HCT116 (cell line): ENCODE measurements at regions of chr9 and their contacts with region 1.

Region 1: GRCh38 chr9:20562051-20562450 is 60.2 kb downstream of the MLLT3 start:
- DNase-seq: no peak
- ATAC-seq: no peak
- H3K4me3 ChIP-seq: no peak overlapping the region
- H3K27ac ChIP-seq: no peak overlapping the region
- H3K4me1 ChIP-seq: no peaks in the 10 kb centered on the region
- H3K27me3 ChIP-seq: peaks cover 23% of the 10 kb centered on the region
- CTCF ChIP-seq: no peak
- POLR2A ChIP-seq: no peak
- RAD21 ChIP-seq: no peak

Region 2: GRCh38 chr9:20573023-20573422 is 11.0 kb after region 1 on chr9:
- CTCF ChIA-PET with region 1: no interaction called
- POLR2A ChIA-PET with region 1: no interaction called
- RAD21 ChIA-PET with region 1: no interaction called
- intact Hi-C with region 1: no loop called
- DNase-seq: no peak
- ATAC-seq: no peak
- H3K4me3 ChIP-seq: no peak overlapping the region
- H3K27ac ChIP-seq: no peak overlapping the region
- H3K4me1 ChIP-seq: no peaks in the 10 kb centered on the region
- H3K27me3 ChIP-seq: peaks cover 8% of the 10 kb centered on the region; the same call in 1 of the 2 replicates
- CTCF ChIP-seq: no peak
- POLR2A ChIP-seq: no peak
- RAD21 ChIP-seq: no peak

Region 3: GRCh38 chr9:20611751-20612287 is 49.8 kb after region 1 on chr9:
- CTCF ChIA-PET with region 1: no interaction called
- POLR2A ChIA-PET with region 1: no interaction called
- RAD21 ChIA-PET with region 1: no interaction called
- intact Hi-C with region 1: loop called (anchors 5 kb)
- DNase-seq: no peak
- ATAC-seq: peak; percentile 62; the same call in 1 of the 2 replicates
- H3K4me3 ChIP-seq: no peak overlapping the region
- H3K27ac ChIP-seq: no peak overlapping the region
- H3K4me1 ChIP-seq: no peaks in the 10 kb centered on the region
- H3K27me3 ChIP-seq: 0 out of 2 replicates have a peak, but pooled peaks cover 4% of the 10 kb centered on the region
- CTCF ChIP-seq: peak in 2 of 3 experiments; percentile 37 to 54; a peak in 4 of 6 replicates
- POLR2A ChIP-seq: no peak
- RAD21 ChIP-seq: no peak